ENCODE measurements at regions of chr9 and their contacts with region 1.

Region 1: GRCh38 chr9:613771-614347 is 227.6 kb upstream of the DMRT1 start:
- DNase-seq: peak; percentile 63
- H3K4me3 ChIP-seq: no peak overlapping the region
- CTCF ChIP-seq: peak; percentile 89

Region 2: GRCh38 chr9:316382-316965 is 297.4 kb before region 1 on chr9:
- CTCF ChIA-PET with region 1: no interaction called
- POLR2A ChIA-PET with region 1: no interaction called
- DNase-seq: no peak
- H3K4me3 ChIP-seq: no peak overlapping the region
- CTCF ChIP-seq: no peak

Region 3: GRCh38 chr9:530681-531080 is 83.2 kb before region 1 on chr9:
- CTCF ChIA-PET with region 1: no interaction called
- POLR2A ChIA-PET with region 1: no interaction called
- DNase-seq: no peak
- H3K4me3 ChIP-seq: no peak overlapping the region
- CTCF ChIP-seq: no peak

Region 4: GRCh38 chr9:602732-603525 is 10.9 kb before region 1 on chr9:
- CTCF ChIA-PET with region 1: interaction called, 11 read pairs
- POLR2A ChIA-PET with region 1: no interaction called
- DNase-seq: no peak
- H3K4me3 ChIP-seq: no peak overlapping the region
- CTCF ChIP-seq: no peak

Region 5: DNA sequence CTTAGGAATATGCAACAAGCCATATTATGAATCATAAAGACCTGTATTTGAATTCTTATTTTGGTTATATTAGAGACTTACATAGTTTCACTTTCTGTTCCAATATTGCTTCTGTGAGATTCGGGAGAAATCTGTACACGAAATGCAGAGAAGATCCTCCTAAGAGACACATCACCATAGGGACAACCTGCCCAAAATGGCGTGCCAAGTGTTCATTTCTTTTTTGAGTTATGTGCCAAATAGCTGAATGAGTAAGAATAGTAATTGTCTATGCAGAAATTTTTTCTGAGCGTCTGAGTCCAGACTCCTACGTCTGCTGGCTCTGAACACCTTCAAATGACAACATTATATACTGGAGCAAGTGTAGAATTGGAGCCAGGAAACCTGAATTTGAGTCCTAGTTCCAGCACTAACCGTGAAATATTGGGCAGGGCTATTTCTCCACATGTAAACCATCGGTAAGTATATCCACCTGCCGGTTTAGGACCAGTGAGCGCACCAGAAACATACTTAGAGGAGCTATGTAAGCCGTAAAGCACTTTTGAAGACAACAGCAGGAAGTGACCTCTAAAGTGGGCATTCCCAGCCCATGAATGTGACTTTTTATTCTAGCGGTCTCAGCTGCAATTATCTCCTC is 63.7 kb after region 1 on chr9:
- CTCF ChIA-PET with region 1: no interaction called
- POLR2A ChIA-PET with region 1: no interaction called
- DNase-seq: no peak
- H3K4me3 ChIP-seq: no peak overlapping the region
- CTCF ChIP-seq: no peak

Region 6: GRCh38 chr9:757246-757881 is 143.5 kb after region 1 on chr9:
- CTCF ChIA-PET with region 1: interaction called, 124 read pairs
- POLR2A ChIA-PET with region 1: interaction called, 3 read pairs
- DNase-seq: no peak
- H3K4me3 ChIP-seq: no peak overlapping the region
- CTCF ChIP-seq: peak; percentile 67

Region 7: DNA sequence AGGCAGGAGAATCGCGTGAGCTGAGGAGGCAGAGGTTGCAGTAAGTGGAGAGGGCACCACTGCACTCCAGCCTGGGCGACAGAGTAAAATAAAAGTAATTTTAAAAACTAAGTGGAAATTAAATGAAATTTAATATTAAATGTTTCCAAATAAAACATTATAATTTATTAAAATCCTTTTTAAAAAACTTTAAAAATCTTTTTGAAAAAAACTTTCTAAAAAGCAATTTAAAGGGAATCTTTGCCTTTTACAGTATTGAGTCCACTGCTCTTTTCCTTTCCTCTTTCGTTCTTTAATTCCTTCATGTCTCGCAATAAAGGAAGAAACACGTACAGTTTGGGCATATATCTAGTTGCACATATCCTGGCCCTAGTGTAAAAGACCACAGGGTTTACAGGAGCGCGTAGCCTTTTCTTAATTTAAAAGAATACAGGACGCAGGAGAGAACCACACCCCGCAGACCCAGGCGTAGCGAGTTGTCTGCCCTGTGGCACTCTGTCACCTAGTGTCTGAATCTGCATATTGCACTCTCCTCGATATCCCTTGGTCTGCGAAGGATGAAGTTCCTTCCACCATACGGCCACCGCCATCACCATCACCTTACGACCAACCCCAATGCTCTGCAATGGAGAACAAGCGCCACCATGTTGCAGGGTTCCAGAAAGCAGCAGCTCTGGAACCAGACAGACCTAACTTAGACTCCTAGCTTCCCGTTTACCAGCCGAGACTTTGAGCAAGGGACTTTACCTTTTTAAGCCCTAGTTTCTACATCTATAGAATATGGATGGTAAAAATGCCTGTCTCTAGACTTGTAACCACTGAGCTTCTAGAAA is 150.0 kb after region 1 on chr9:
- CTCF ChIA-PET with region 1: interaction called, 124 read pairs
- POLR2A ChIA-PET with region 1: no interaction called
- DNase-seq: no peak
- H3K4me3 ChIP-seq: no peak overlapping the region
- CTCF ChIP-seq: peak; percentile 56

Region 8: DNA sequence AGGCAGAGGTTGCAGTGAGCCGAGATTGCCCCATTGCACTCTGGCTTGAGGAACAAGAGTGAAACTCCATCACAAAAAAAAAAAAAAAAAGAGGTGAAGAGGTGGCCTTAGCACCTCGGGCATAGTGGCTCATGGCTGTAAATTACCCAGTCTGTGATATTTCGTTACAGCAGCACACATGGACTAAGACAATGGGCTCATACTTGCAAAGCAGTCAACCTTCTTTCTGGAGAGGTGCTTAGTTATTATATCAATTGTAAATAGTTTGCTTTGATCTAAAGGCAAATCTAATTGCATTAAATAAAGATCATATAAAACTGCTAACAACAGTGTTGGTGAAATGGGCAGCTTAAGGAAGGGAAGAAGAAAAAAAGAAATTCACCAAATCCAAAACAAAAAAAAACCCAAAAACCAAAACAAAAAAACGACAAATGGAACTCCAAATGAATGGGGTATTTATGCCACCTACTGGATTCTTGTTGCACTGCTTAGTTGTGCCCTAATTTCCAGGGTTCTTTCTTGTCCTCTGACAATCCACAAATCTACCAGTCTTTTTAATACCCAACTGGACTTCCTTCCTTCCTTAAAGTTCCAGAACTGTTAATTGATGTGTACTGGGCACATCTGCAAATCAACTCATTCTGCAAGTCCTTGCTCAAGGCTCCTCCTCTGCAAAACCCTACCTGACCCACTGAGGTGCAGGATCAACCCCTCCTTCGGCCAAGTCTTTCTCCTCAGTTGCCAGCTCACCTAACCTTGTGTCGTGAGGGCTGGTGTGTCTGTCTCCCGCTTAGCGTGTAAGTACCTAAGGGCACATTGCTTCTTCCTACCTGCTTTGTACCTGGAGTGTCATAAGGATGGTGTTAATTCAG is 192.7 kb after region 1 on chr9:
- CTCF ChIA-PET with region 1: interaction called, 246 read pairs
- POLR2A ChIA-PET with region 1: no interaction called
- DNase-seq: no peak
- H3K4me3 ChIP-seq: no peak overlapping the region
- CTCF ChIP-seq: peak; percentile 62

Region 9: GRCh38 chr9:1009101-1009707 is 395.3 kb after region 1 on chr9:
- CTCF ChIA-PET with region 1: interaction called, 11 read pairs
- POLR2A ChIA-PET with region 1: no interaction called
- DNase-seq: no peak
- H3K4me3 ChIP-seq: no peak overlapping the region
- CTCF ChIP-seq: peak; percentile 96

Measured in AG04449 (cell line).